ENCODE measurements at regions of chr10 and their contacts with region 1.

Region 1: GRCh38 chr10:131786756-131787605 is 113.8 kb upstream of the PPP2R2D start:
- DNase-seq: peak; percentile 31 to 61 (median 48)
- ATAC-seq: no peak
- H3K4me3 ChIP-seq: no peak overlapping the region
- H3K27ac ChIP-seq: no peak overlapping the region
- H3K4me1 ChIP-seq: no peaks in the 10 kb centered on the region
- H3K27me3 ChIP-seq: no peaks in the 10 kb centered on the region
- CTCF ChIP-seq: peak; percentile 33 to 80 (median 70)
- POLR2A ChIP-seq: no peak

Region 2: DNA sequence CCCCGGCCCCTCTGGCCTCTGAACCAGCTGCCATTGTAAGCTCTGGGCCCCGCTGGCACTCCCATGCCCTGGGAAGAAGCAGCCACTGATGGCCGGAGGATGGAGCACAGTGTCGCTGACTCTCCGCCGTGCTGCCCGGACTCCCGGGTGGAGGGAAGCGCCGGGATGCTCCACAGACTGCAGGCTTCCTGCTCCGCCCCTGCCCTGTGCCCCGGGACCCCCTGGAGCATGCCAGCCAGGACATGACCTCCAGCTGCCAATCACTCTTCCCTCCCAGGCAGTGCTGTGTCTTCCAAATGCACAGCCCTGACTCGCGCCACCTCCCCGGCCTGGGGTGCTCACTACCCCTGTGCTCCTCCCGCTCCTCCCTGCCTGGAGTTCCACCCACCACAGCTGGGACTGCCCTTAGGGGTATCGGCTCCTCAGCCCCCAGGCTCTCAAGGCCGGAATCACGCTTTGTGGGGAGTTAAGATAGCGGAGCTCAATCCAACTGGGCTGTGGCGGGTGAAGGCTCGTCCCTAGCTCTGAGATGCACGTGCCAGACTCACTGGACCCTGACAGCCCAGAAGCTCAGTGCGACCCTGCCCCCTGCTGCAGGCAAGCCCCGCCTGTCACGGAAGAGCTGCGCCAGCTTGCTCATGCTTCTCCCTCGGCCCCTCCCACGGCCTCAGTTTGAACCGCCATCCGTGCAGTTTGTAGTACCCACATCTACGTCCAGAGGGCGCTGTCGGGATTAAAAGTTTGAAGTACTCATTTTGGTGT is 333.2 kb before region 1 on chr10:
- intact Hi-C with region 1: loop called (anchors 10 kb)
- DNase-seq: peak; percentile 62 to 76 (median 72)
- ATAC-seq: no peak
- H3K4me3 ChIP-seq: no peak overlapping the region
- H3K27ac ChIP-seq: no peak overlapping the region
- H3K4me1 ChIP-seq: peaks cover 6% of the 10 kb centered on the region
- H3K27me3 ChIP-seq: peaks cover 0 to 10% of the 10 kb centered on the region in 2 donors
- CTCF ChIP-seq: peak; percentile 66 to 96 (median 73)
- POLR2A ChIP-seq: no peak

Region 3: GRCh38 chr10:131689016-131689415 is 98.0 kb before region 1 on chr10:
- intact Hi-C with region 1: no loop called
- DNase-seq: no peak
- ATAC-seq: no peak
- H3K4me3 ChIP-seq: no peak overlapping the region
- H3K27ac ChIP-seq: no peak overlapping the region
- H3K4me1 ChIP-seq: no peaks in the 10 kb centered on the region
- H3K27me3 ChIP-seq: no peaks in the 10 kb centered on the region
- CTCF ChIP-seq: no peak
- POLR2A ChIP-seq: no peak

Measured in body of pancreas (tissue), 4 donors.